B cell (primary cell): ENCODE measurements at regions of chrX and their contacts with region 1.

Region 1: DNA sequence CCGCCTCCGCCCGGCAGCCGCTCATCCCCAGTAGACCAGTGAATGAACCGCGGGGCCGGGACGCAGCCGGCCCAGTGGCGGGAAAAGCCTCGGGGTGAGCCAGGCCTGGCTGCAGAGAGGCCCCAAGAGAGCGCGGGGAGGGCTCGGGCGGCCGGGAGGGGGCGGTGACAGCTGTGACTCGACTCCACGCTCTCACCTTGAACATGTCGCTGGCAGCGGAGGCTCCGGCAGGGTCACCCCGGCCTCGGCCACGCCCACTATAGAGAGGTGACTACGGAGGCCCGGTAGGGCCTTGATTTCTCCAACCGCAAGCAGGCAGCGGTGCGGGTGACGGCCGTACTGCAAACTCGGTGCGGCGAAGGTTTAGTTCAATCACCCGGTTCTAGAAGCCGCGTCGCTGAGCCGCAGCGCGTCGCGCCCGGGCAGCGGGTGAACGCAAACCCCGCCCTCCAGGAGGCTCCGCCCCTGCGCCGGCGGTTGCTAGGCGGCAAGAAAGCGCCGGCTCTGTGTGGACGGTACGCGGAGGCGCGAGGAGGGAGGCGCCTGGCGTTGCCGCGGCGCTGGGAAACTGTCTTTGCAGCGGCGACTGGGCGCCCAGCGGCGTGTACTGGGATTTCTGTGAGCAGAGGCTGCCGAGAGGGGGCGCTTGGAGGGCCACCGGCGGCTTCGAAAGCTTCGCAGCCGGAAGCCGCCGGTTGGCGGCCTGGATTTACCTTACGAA is at the starts of genes APOO and CXorf58:
- DNase-seq: peak; percentile 94
- ATAC-seq: peak; percentile 89
- H3K4me3 ChIP-seq: peak within 1 kb of the TSS; percentile 31 to 73 (median 60)
- H3K4me3 Mint-ChIP-seq: peak within 1 kb of the TSS; percentile 88
- H3K27ac ChIP-seq: peak within 1 kb of the TSS; percentile 91 to 92
- H3K27ac Mint-ChIP-seq: peak within 1 kb of the TSS; percentile 94
- H3K4me1 ChIP-seq: peaks cover 4 to 15% of the 10 kb centered on the region in 2 donors
- H3K4me1 Mint-ChIP-seq: peaks cover 17% of the 10 kb centered on the region
- H3K27me3 ChIP-seq: no peaks in the 10 kb centered on the region
- H3K27me3 Mint-ChIP-seq: no peaks in the 10 kb centered on the region
- CTCF ChIP-seq: peak; percentile 57
- total RNA-seq, gene APOO: 7.2 and 11.7 TPM in 2 replicates
- total RNA-seq, gene CXorf58: not detected in 2 replicates

Region 2: GRCh38 chrX:23046443-23046842 is 861.2 kb before region 1 on chrX:
- CTCF ChIA-PET with region 1: no interaction called
- POLR2A ChIA-PET with region 1: no interaction called
- intact Hi-C with region 1: no loop called
- DNase-seq: no peak
- ATAC-seq: no peak
- H3K4me3 ChIP-seq: no peak overlapping the region
- H3K4me3 Mint-ChIP-seq: no peak overlapping the region
- H3K27ac ChIP-seq: no peak overlapping the region
- H3K27ac Mint-ChIP-seq: no peak overlapping the region
- H3K4me1 ChIP-seq: no peaks in the 10 kb centered on the region
- H3K4me1 Mint-ChIP-seq: no peaks in the 10 kb centered on the region
- H3K27me3 ChIP-seq: no peaks in the 10 kb centered on the region
- H3K27me3 Mint-ChIP-seq: no peaks in the 10 kb centered on the region
- CTCF ChIP-seq: no peak

Region 3: DNA sequence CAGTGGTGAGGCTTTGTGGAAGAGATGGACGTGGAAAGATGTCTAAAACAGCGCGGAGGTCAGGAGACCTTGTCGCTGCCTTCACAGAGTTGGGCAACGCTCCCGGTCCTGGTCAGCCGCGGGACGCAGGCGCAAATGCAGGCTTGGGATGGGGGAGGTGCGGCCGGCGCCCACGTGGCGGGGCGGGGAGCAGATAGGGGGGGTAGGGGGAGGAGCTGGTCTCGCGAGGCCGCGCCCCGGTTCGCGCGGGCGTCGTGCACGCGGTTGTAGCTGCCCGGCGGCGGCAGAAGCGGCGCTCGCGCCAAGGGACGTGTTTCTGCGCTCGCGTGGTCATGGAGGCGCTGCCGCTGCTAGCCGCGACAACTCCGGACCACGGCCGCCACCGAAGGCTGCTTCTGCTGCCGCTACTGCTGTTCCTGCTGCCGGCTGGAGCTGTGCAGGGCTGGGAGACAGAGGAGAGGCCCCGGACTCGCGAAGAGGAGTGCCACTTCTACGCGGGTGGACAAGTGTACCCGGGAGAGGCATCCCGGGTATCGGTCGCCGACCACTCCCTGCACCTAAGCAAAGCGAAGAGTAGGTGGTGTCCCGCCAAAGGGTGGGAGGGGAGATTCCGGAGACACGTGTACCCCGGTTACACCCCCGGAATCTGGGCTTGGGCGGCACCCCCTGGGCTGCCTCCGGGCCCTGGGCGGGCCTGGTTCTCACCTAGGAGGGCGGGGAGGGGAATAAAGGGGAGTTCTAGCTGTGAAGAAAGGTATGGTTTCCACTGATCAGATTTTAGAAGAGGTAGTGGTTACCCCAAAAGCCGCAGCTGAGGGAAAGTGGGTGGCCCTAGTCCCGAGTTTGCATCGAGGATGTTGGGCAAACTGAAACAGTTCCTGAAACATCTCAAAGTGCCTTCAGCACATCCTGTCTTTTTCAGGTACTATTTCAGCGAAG is 240.2 kb before region 1 on chrX and contains the start of gene PRDX4:
- CTCF ChIA-PET with region 1: interaction called, 12 read pairs
- POLR2A ChIA-PET with region 1: no interaction called
- intact Hi-C with region 1: loop called (anchors 10 kb)
- DNase-seq: peak; percentile 83
- ATAC-seq: peak; percentile 91
- H3K4me3 ChIP-seq: peak within 1 kb of the TSS; percentile 21 to 66 (median 64)
- H3K4me3 Mint-ChIP-seq: peak within 1 kb of the TSS; percentile 91
- H3K27ac ChIP-seq: peak within 1 kb of the TSS; percentile 77 to 82
- H3K27ac Mint-ChIP-seq: peak within 1 kb of the TSS; percentile 94
- H3K4me1 ChIP-seq: peaks cover 7 to 15% of the 10 kb centered on the region in 2 donors
- H3K4me1 Mint-ChIP-seq: peaks cover 20% of the 10 kb centered on the region
- H3K27me3 ChIP-seq: no peaks in the 10 kb centered on the region
- H3K27me3 Mint-ChIP-seq: no peaks in the 10 kb centered on the region
- CTCF ChIP-seq: no peak
- total RNA-seq, gene PRDX4: 10.6 and 12.8 TPM in 2 replicates

Region 4: GRCh38 chrX:23952984-23953907 is 45.6 kb after region 1 on chrX:
- CTCF ChIA-PET with region 1: interaction called, 8 read pairs
- POLR2A ChIA-PET with region 1: no interaction called
- intact Hi-C with region 1: loop called (anchors 1 kb)
- DNase-seq: peak; percentile 63
- ATAC-seq: peak; percentile 87
- H3K4me3 ChIP-seq: peak overlapping the region; percentile 15 to 60 (median 29)
- H3K4me3 Mint-ChIP-seq: peak overlapping the region; percentile 70
- H3K27ac ChIP-seq: peak overlapping the region; percentile 65 to 76
- H3K27ac Mint-ChIP-seq: peak overlapping the region; percentile 89
- H3K4me1 ChIP-seq: peaks cover 6 to 17% of the 10 kb centered on the region in 2 donors
- H3K4me1 Mint-ChIP-seq: peaks cover 10% of the 10 kb centered on the region
- H3K27me3 ChIP-seq: no peaks in the 10 kb centered on the region
- H3K27me3 Mint-ChIP-seq: no peaks in the 10 kb centered on the region
- CTCF ChIP-seq: no peak

Region 5: DNA sequence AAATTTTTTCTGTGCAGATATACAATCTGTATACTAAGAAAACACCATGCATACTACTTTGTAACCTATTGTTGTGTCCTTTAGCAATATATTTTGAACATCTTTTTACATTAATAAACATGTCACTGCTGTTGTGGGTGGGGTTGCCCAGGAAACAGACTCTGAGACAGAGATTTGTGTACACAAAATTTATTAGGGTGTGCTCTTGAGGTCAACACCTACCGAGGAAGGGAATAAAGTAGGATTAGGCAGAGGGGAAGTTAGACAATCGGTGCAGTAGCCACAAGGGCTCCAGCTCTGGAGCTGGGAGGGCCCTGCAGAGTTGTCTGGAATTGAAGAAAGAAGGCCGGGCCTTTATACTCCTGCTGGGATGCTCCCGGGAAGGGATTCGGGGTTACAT is 56.5 kb after region 1 on chrX:
- CTCF ChIA-PET with region 1: no interaction called
- POLR2A ChIA-PET with region 1: no interaction called
- intact Hi-C with region 1: no loop called
- DNase-seq: no peak
- ATAC-seq: no peak
- H3K4me3 ChIP-seq: no peak overlapping the region
- H3K4me3 Mint-ChIP-seq: no peak overlapping the region
- H3K27ac ChIP-seq: no peak overlapping the region
- H3K27ac Mint-ChIP-seq: no peak overlapping the region
- H3K4me1 ChIP-seq: no peaks in the 10 kb centered on the region
- H3K4me1 Mint-ChIP-seq: no peaks in the 10 kb centered on the region
- H3K27me3 ChIP-seq: no peaks in the 10 kb centered on the region
- H3K27me3 Mint-ChIP-seq: no peaks in the 10 kb centered on the region
- CTCF ChIP-seq: no peak

Region 6: DNA sequence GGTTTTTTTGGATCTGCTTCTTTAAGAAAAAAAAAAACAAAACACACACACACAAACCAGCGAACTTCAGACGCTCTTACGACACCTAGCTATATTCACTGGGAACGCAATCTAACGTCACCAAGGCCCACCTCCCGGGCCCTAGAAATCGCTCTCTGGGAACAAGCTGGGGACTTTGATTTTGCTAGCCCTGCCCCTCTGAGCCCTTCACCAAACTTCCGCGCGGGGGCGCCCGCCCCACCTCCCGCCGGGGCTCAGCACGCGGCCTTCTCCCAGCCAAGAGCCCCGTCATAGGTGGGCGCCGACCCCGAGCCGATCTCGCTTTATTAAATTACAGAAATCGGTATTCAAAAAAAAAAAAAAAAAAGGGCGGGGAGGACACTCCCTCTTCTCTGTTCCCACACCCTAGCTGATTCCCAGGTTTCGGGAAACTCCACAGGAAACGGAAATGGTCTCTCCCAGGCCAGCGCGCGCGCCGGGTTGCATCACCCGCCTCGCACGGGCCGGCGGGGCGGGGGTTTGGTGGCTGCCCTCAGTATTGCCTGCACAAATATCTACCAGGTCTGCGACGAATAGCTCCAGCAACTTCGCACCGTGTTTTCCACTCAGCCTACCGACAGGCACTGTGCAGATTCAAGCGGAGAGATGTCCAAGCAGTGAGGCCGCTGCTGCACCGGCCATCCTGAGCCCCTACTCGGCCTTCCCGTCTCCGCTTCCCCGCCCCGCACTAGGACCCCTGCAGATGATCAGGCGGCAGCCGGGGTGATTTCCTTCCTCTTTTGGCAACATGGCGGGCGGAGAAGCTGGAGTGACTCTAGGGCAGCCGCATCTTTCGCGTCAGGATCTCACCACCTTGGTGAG is 146.8 kb after region 1 on chrX and contains the start of gene EIF2S3:
- CTCF ChIA-PET with region 1: interaction called, 35 read pairs
- POLR2A ChIA-PET with region 1: interaction called, 10 read pairs
- intact Hi-C with region 1: loop called (anchors 1 kb)
- DNase-seq: peak; percentile 95
- ATAC-seq: peak; percentile 80
- H3K4me3 ChIP-seq: peak within 1 kb of the TSS; percentile 76 to 98 (median 89)
- H3K4me3 Mint-ChIP-seq: peak within 1 kb of the TSS; percentile 99
- H3K27ac ChIP-seq: no peak within 1 kb of the TSS
- H3K27ac Mint-ChIP-seq: peak within 1 kb of the TSS; percentile 100
- H3K4me1 ChIP-seq: no peaks in the 10 kb centered on the region
- H3K4me1 Mint-ChIP-seq: peaks cover 3% of the 10 kb centered on the region
- H3K27me3 ChIP-seq: no peaks in the 10 kb centered on the region
- H3K27me3 Mint-ChIP-seq: no peaks in the 10 kb centered on the region
- CTCF ChIP-seq: peak; percentile 71
- total RNA-seq, gene EIF2S3: 260 and 272 TPM in 2 replicates

Region 7: DNA sequence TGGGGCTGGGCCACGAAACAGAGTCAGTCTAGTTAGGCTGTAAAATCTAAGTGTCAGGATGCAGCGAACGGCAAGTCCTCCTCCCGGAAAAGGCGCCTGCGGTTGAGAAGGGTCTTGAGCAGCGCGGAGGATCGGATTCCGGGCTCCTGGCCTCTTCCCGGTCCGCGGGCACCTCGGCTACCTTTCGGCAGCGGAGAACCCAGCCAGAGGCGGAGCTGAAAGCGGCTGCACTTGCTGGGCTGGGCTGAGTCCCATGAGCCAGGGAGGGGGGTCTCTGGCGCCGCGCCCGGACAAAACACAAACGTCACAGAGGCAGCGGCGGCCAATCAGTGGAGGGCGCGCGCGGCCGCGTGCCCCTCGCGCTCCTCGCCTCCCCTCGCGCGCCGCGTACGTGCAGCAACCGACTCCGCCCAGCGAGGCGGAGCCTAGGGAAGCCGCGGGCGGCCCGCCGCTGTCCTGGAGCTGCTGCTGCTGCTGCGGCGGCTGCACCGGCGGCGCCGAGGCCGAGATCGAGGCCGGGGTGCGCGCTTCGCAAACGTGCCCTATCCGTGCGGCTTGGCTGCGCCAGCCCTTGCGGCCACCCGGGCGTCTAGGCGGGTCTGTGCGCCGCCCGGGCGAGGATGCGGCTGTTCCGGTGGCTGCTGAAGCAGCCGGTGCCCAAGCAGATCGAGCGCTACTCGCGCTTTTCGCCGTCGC is 557.3 kb after region 1 on chrX and contains the start of gene PDK3:
- CTCF ChIA-PET with region 1: no interaction called
- POLR2A ChIA-PET with region 1: no interaction called
- intact Hi-C with region 1: loop called (anchors 2 kb)
- DNase-seq: peak; percentile 92
- ATAC-seq: peak; percentile 94
- H3K4me3 ChIP-seq: peak within 1 kb of the TSS; percentile 21 to 85 (median 67)
- H3K4me3 Mint-ChIP-seq: peak within 1 kb of the TSS; percentile 87
- H3K27ac ChIP-seq: peak within 1 kb of the TSS; percentile 78 to 80
- H3K27ac Mint-ChIP-seq: peak within 1 kb of the TSS; percentile 91
- H3K4me1 ChIP-seq: peaks cover 21 to 22% of the 10 kb centered on the region in 2 donors
- H3K4me1 Mint-ChIP-seq: peaks cover 47% of the 10 kb centered on the region
- H3K27me3 ChIP-seq: no peaks in the 10 kb centered on the region
- H3K27me3 Mint-ChIP-seq: no peaks in the 10 kb centered on the region
- CTCF ChIP-seq: no peak
- total RNA-seq, gene PDK3: 18.3 and 21.6 TPM in 2 replicates